ENCODE measurements at regions of chr4 and their contacts with region 1.

Region 1: GRCh38 chr4:111475001-111475400 is 670.3 kb upstream of the FAM241A start:
- DNase-seq: peak in 2 of 3 donors; percentile 39 to 56
- ATAC-seq: no peak
- H3K4me3 ChIP-seq: no peak overlapping the region
- H3K27ac ChIP-seq: no peak overlapping the region
- H3K4me1 ChIP-seq: no peaks in the 10 kb centered on the region
- H3K27me3 ChIP-seq: no peaks in the 10 kb centered on the region

Region 2: DNA sequence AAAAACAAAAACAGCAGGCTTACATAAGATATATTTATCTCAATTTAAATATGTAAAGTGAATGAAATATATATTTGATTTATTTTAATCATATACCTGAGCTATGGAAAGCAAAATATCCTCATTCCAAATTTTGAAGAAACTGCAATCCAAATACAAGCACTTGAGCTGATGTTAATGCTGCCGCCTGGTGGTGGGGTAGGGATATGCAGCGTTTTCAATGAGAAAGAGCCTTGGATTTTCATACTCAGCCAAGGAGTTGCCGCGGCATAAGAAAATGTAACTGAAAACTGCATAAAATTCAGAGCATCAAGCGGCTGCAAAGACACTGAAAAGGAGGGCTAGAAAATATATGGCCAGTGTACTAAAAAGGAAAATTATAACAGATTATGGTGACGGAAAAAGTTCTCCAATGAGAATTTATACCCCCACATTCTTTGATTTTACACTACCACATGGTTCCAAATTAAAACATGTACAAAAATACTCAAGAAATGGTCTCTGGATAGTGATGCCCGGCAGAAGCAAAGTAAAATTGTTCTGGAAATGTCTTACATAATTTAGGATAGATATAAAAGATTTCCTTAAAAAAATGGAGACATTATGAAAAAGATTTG is 191.8 kb before region 1 on chr4:
- intact Hi-C with region 1: loop called in 1 of 4 experiments (anchors 10 kb)
- DNase-seq: peak; percentile 15 to 55 (median 39)
- ATAC-seq: no peak
- H3K4me3 ChIP-seq: no peak overlapping the region
- H3K27ac ChIP-seq: no peak overlapping the region
- H3K4me1 ChIP-seq: no peaks in the 10 kb centered on the region
- H3K27me3 ChIP-seq: no peaks in the 10 kb centered on the region